ENCODE measurements at regions of chr19 and their contacts with region 1.

Region 1: GRCh38 chr19:42440357-42441048 is 2.2 kb downstream of the CXCL17 start:
- DNase-seq: peak; percentile 21

Region 2: DNA sequence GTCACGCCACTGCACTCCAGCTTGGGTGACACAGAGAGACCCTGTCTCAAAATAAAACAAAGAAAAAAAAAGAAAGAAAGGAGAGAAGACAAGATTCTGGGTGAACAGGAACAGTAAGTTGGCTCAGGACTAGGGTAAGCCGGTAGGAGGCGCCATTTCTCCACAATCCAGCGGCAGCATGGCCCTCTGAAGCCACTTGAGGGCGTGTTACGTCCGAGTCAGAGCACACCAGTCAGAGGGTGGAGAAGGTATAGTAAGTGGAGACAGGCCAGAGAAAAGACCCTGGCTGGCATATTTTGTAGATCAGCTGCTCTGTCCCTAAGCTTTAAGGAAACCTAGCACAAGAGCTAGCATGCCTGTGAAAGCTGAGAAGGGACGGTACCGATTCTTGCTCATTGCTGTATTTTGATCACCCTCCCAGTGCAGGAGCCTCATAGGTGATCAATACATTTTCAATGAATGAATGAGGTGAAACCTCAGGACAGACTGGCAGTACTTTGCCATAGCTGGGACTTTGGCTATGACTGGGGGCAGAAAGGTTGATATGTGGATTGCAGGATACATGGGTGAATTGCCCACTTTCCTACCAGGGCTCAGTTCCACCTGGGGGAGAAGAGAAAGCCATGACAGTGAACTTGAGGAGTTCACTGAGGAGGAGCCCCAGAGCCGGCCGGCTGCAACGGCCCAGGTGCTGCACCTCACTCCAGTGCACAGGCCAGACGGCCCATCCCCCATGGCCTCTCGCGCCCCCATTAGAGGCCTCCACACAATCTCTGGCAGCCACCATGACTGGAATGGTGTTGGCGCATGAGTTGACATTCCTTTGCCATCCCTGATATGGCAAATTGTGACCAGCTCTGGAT is 331.7 kb before region 1 on chr19:
- in situ Hi-C with region 1: loop called (anchors 25 kb)
- DNase-seq: peak; percentile 59

Region 3: DNA sequence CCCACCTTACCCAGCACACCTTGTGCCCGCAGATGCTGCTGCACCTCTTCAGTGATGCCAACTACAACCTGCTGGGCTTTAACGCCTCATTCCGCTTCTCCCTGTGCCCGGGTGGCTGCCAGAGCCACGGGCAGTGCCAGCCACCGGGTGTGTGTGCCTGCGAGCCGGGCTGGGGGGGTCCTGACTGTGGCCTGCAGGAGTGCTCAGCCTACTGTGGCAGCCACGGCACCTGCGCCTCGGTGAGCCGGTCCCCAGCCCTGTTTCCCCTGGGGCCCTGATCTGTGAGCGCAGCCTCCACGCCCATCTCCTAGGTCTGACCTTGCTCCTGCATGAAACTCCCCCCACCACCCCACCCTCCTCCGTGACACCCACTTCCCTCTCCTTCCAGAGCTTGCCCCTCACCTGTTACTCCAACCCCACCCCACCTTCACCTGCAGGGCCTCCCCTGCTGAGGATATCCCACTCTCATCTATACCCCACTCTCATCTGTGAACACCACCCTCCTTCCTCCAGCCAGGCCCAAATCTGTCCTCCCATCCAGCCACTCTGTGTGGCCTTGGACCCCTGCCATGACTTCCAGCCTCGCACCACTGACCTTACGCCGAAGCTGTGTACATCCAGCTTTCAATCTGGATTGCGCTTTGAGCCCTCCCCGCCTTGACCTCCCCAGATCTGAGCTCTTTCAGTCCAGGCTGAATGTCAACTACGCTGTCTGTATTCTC is 106.4 kb before region 1 on chr19:
- in situ Hi-C with region 1: no loop called
- DNase-seq: no peak

Region 4: GRCh38 chr19:42662712-42663111 is 222.2 kb after region 1 on chr19:
- in situ Hi-C with region 1: no loop called
- DNase-seq: no peak